ENCODE measurements at regions of chr17 and their contacts with region 1.

Region 1: GRCh38 chr17:7561028-7561575 is 617 bp upstream of the SENP3 start:
- DNase-seq: peak; percentile 87 to 93
- ATAC-seq: peak; percentile 83
- H3K4me3 ChIP-seq: peak overlapping the region; percentile 87 to 95 (median 88)
- H3K27ac ChIP-seq: peak overlapping the region; percentile 93 to 96 (median 96)
- H3K4me1 ChIP-seq: peaks cover 48 to 62% of the 10 kb centered on the region in 2 donors
- H3K27me3 ChIP-seq: no peaks in the 10 kb centered on the region
- CTCF ChIP-seq: peak; percentile 90 to 91 (median 90)
- POLR2A ChIP-seq: no peak

Region 2: DNA sequence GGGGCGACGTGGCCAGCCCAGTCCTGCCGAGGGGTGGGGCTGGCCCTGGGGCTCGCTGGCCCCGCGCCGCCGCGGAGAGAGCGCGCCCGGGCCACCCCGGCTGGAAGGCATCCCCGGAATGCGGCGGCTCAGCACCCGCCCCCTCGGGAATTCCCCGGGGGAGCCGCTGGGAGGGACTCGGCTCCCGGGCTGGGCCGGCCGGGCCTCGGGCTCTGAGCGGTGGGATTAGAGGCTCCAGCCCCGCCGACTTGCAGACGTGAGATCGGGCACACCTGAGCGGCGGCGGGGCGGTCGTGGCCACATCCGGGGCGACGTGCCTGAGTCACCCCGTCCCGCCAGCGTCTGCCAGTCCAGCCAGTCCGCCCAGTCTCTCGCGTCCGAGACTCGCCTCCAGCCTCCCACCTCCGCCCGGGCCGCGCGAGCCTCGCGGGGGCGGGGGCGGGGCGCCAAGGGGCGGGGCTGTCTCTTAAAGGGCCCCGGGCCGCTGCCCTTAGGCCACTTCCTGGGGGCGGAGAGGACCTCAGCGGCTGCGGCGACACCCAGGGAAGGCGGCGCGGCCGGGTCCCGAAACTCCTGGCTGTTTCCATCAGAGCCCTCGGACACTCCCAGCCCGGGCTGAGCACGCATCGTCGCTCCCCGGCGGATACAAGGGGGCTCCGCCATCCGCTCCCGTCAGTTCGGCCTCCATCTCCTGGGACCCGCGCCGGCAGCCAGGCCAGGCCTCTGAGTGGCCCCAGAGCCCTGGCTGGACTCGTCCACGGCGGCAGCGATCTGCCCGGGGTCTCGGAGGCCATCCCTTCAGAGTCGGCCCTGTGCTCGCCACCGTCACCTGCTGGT is 209.2 kb before region 1 on chr17 and contains the start of gene KCTD11:
- in situ Hi-C with region 1: loop called in 1 of 4 experiments (anchors 10 kb)
- intact Hi-C with region 1: loop called (anchors 1 kb)
- DNase-seq: peak; percentile 84 to 91
- ATAC-seq: peak; percentile 70 to 81
- H3K4me3 ChIP-seq: peak within 1 kb of the TSS; percentile 71 to 100 (median 84)
- H3K27ac ChIP-seq: peak within 1 kb of the TSS; percentile 93 to 98 (median 96)
- H3K4me1 ChIP-seq: peaks cover 22 to 40% of the 10 kb centered on the region in 2 donors
- H3K27me3 ChIP-seq: no peaks in the 10 kb centered on the region
- CTCF ChIP-seq: peak in 3 of 5 experiments; percentile 58 to 74 (median 60)
- POLR2A ChIP-seq: peak; percentile 72 to 75
- total RNA-seq, gene KCTD11: 3.6 to 7.0 (median 4.6) TPM

Region 3: GRCh38 chr17:7367083-7367482 is 194.0 kb before region 1 on chr17:
- in situ Hi-C with region 1: no loop called
- intact Hi-C with region 1: no loop called
- DNase-seq: no peak
- ATAC-seq: no peak
- H3K4me3 ChIP-seq: no peak overlapping the region
- H3K27ac ChIP-seq: no peak overlapping the region
- H3K4me1 ChIP-seq: no peaks in the 10 kb centered on the region
- H3K27me3 ChIP-seq: no peaks in the 10 kb centered on the region
- CTCF ChIP-seq: no peak
- POLR2A ChIP-seq: no peak

Region 4: DNA sequence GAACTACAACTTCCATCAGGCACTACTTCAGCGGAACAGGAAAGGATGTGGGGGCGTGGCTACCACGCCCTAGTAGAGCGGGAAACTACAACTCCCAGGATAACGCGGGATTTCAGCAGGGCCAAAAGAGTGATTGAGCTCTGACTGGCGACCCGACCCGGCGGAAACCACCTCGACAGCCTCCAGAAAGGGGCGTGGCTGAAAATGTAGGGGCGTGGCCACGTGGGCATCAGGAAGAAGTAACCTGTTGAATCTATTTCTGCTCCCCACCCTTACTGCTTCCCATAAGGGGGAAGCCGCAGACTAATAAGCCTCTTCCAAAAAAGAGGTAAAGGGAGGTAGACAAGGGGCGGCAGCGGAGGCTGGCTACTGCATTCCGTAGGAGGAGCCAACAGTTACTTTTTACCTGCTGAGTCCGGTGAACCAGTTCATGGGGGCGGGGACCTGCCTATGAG is 125.9 kb before region 1 on chr17 and contains the start of gene TMEM102:
- in situ Hi-C with region 1: loop called in 1 of 4 experiments (anchors 25 kb)
- intact Hi-C with region 1: loop called (anchors 1 kb)
- DNase-seq: peak; percentile 95 to 97
- ATAC-seq: peak; percentile 84 to 88
- H3K4me3 ChIP-seq: peak within 1 kb of the TSS; percentile 53 to 63 (median 58)
- H3K27ac ChIP-seq: peak within 1 kb of the TSS; percentile 80 to 100 (median 94)
- H3K4me1 ChIP-seq: peaks cover 29 to 45% of the 10 kb centered on the region in 2 donors
- H3K27me3 ChIP-seq: peaks cover 0 to 4% (median 0%) of the 10 kb centered on the region in 3 donors
- CTCF ChIP-seq: no peak
- POLR2A ChIP-seq: peak; percentile 11 to 14
- total RNA-seq, gene TMEM102: 0.92 to 3.9 (median 2.3) TPM

Region 5: DNA sequence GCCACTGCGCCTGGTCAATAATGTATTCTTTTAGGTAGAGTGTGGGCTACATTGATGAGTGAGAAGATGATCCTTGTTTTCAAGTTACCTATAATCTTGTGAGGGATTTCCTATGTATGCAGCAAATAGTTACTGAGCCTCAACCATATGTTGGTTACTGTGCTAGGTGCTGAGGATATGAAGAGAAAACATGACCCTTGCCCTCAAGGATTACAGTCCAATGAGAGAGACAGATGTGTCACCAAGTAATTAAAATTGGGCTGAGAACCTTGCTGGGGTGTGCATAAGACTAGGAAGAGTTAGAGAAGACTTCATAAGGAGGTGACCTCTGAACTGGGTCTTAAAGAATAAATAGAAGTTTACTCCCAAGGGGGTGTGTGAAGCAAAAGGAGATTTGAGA is 69.5 kb before region 1 on chr17:
- in situ Hi-C with region 1: no loop called
- intact Hi-C with region 1: no loop called
- DNase-seq: no peak
- ATAC-seq: no peak
- H3K4me3 ChIP-seq: no peak overlapping the region
- H3K27ac ChIP-seq: no peak overlapping the region
- H3K4me1 ChIP-seq: peaks cover 23 to 36% of the 10 kb centered on the region in 2 donors
- H3K27me3 ChIP-seq: no peaks in the 10 kb centered on the region
- CTCF ChIP-seq: no peak
- POLR2A ChIP-seq: no peak

Region 6: GRCh38 chr17:7502987-7503386 is 58.1 kb before region 1 on chr17:
- in situ Hi-C with region 1: loop called in 1 of 4 experiments (anchors 10 kb)
- intact Hi-C with region 1: no loop called
- DNase-seq: no peak
- ATAC-seq: no peak
- H3K4me3 ChIP-seq: no peak overlapping the region
- H3K27ac ChIP-seq: no peak overlapping the region
- H3K4me1 ChIP-seq: no peaks in the 10 kb centered on the region
- H3K27me3 ChIP-seq: no peaks in the 10 kb centered on the region
- CTCF ChIP-seq: peak in 1 of 5 experiments; percentile 20
- POLR2A ChIP-seq: no peak

Region 7: GRCh38 chr17:7572588-7573323 is 11.7 kb after region 1 on chr17:
- in situ Hi-C with region 1: no loop called
- intact Hi-C with region 1: loop called (anchors 1 kb)
- DNase-seq: peak; percentile 99 to 100
- ATAC-seq: peak; percentile 14 to 83
- H3K4me3 ChIP-seq: peak overlapping the region; percentile 90 to 100 (median 95)
- H3K27ac ChIP-seq: peak overlapping the region; percentile 98 to 100 (median 99)
- H3K4me1 ChIP-seq: peaks cover 37 to 42% of the 10 kb centered on the region in 2 donors
- H3K27me3 ChIP-seq: no peaks in the 10 kb centered on the region
- CTCF ChIP-seq: no peak
- POLR2A ChIP-seq: peak; percentile 98 to 99

Region 8: GRCh38 chr17:7614422-7615264 is 53.5 kb after region 1 on chr17 and contains the start of gene FXR2:
- in situ Hi-C with region 1: no loop called
- intact Hi-C with region 1: loop called (anchors 2 kb)
- DNase-seq: peak; percentile 100
- ATAC-seq: peak; percentile 93 to 94
- H3K4me3 ChIP-seq: peak within 1 kb of the TSS; percentile 71 to 95 (median 74)
- H3K27ac ChIP-seq: peak within 1 kb of the TSS; percentile 88 to 98 (median 91)
- H3K4me1 ChIP-seq: peaks cover 37 to 38% of the 10 kb centered on the region in 2 donors
- H3K27me3 ChIP-seq: no peaks in the 10 kb centered on the region
- CTCF ChIP-seq: peak; percentile 41 to 81 (median 65)
- POLR2A ChIP-seq: peak; percentile 97 to 99
- total RNA-seq, gene FXR2: 100 to 174 (median 140) TPM

Region 9: GRCh38 chr17:7844292-7845154 is 283.4 kb after region 1 on chr17:
- in situ Hi-C with region 1: no loop called
- intact Hi-C with region 1: loop called (anchors 5 kb)
- DNase-seq: peak; percentile 93 to 95
- ATAC-seq: peak; percentile 70 to 73
- H3K4me3 ChIP-seq: peak overlapping the region; percentile 80 to 96 (median 88)
- H3K27ac ChIP-seq: peak overlapping the region; percentile 97 to 100 (median 100)
- H3K4me1 ChIP-seq: peaks cover 28 to 32% of the 10 kb centered on the region in 2 donors
- H3K27me3 ChIP-seq: no peaks in the 10 kb centered on the region
- CTCF ChIP-seq: no peak
- POLR2A ChIP-seq: peak; percentile 97

Measured in gastrocnemius medialis (tissue), 4 donors.